ENCODE measurements at regions of chr1 and their contacts with region 1.

Region 1: DNA sequence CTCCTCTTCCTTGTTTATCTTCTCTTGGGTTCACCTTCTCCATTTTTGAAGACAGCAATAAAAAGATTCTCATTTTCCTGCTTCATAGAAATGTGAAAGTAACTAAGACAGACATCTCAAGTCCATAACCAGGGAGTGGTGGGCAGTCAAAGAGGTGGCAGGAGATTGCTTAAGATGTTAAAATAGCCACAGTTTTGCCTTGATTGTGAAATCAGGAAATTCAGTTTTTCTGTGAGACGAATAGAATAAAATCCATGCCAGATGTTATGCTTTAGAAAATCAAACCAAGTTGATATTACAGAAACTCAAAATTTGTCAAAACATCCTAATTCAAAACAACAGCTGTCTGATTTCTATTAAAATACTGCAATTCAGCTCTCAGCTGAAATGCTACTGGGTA is 57.2 kb downstream of the TNN start:
- DNase-seq: no peak
- H3K4me3 ChIP-seq: no peak overlapping the region
- H3K4me3 Mint-ChIP-seq: no peak overlapping the region
- H3K27ac Mint-ChIP-seq: no peak overlapping the region
- H3K4me1 ChIP-seq: peaks cover 9% of the 10 kb centered on the region
- H3K4me1 Mint-ChIP-seq: no peaks in the 10 kb centered on the region
- H3K27me3 ChIP-seq: no peaks in the 10 kb centered on the region
- H3K27me3 Mint-ChIP-seq: peaks cover 2% of the 10 kb centered on the region
- CTCF ChIP-seq: no peak

Region 2: GRCh38 chr1:174769961-174770549 is 354.8 kb before region 1 on chr1:
- CTCF ChIA-PET with region 1: no interaction called
- POLR2A ChIA-PET with region 1: no interaction called
- intact Hi-C with region 1: loop called (anchors 1 kb)
- DNase-seq: peak in 1 of 2 experiments; percentile 19
- H3K4me3 ChIP-seq: no peak overlapping the region
- H3K4me3 Mint-ChIP-seq: no peak overlapping the region
- H3K27ac Mint-ChIP-seq: no peak overlapping the region
- H3K4me1 ChIP-seq: peaks cover 23% of the 10 kb centered on the region
- H3K4me1 Mint-ChIP-seq: peaks cover 34% of the 10 kb centered on the region
- H3K27me3 ChIP-seq: no peaks in the 10 kb centered on the region
- H3K27me3 Mint-ChIP-seq: no peaks in the 10 kb centered on the region
- CTCF ChIP-seq: peak; percentile 49 to 67

Region 3: GRCh38 chr1:174953285-174954072 is 171.4 kb before region 1 on chr1:
- CTCF ChIA-PET with region 1: no interaction called
- POLR2A ChIA-PET with region 1: no interaction called
- intact Hi-C with region 1: no loop called
- DNase-seq: peak; percentile 69 to 76
- H3K4me3 ChIP-seq: peak overlapping the region; percentile 13; the same call in 1 of the 2 replicates
- H3K4me3 Mint-ChIP-seq: peak overlapping the region; percentile 41
- H3K27ac Mint-ChIP-seq: peak overlapping the region; percentile 0
- H3K4me1 ChIP-seq: peaks cover 26% of the 10 kb centered on the region
- H3K4me1 Mint-ChIP-seq: peaks cover 15% of the 10 kb centered on the region
- H3K27me3 ChIP-seq: no peaks in the 10 kb centered on the region
- H3K27me3 Mint-ChIP-seq: no peaks in the 10 kb centered on the region
- CTCF ChIP-seq: no peak

Region 4: GRCh38 chr1:175009532-175009931 is 115.3 kb before region 1 on chr1:
- CTCF ChIA-PET with region 1: no interaction called
- POLR2A ChIA-PET with region 1: no interaction called
- intact Hi-C with region 1: no loop called
- DNase-seq: no peak
- H3K4me3 ChIP-seq: no peak overlapping the region
- H3K4me3 Mint-ChIP-seq: no peak overlapping the region
- H3K27ac Mint-ChIP-seq: no peak overlapping the region
- H3K4me1 ChIP-seq: no peaks in the 10 kb centered on the region
- H3K4me1 Mint-ChIP-seq: no peaks in the 10 kb centered on the region
- H3K27me3 ChIP-seq: no peaks in the 10 kb centered on the region
- H3K27me3 Mint-ChIP-seq: no peaks in the 10 kb centered on the region
- CTCF ChIP-seq: no peak

Region 5: DNA sequence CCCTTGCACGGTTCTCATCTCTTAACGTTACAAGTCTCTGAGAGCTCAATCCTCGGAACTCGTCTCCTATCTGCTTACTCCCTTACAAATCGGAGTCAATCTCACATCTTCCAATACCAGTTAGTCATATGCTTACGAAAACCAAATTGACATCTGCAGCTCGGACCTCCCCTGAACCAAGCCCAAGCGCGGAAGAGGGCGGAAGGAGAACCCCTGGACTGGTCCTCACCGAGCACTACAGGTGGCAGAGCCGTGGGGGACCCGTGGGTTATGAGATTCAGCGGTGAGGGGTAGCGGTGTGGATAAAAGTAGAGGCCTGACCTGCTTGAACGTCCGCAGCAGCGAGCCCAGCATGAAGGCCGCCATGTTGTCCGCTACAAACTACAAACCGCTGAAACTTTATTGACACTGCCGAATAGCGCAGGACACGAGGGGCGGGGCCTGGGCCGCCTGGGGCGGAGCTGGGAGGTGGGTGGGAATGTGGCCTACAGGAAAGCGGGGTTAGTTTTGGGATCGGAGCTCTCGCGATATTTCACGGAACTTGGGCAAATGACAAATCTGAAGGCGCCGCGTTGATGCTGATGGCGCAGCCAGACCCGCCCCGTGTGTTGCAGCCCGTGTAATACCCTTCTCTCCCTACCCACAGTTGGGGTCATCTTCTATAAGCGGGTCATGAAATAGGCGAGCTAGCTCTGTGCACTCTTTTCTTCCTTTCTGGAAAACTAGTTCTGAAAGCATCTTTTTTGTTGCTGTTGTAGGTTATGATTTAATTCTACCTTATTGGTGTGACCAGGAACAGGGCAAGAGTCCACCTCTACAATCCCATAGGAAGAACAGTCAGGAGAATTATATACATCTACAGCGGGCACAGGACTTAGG is 101.6 kb before region 1 on chr1 and contains the start of gene MRPS14:
- CTCF ChIA-PET with region 1: interaction called, 15 read pairs
- POLR2A ChIA-PET with region 1: interaction called, 6 read pairs
- intact Hi-C with region 1: no loop called
- DNase-seq: peak; percentile 98 to 99
- H3K4me3 ChIP-seq: peak within 1 kb of the TSS; percentile 66
- H3K4me3 Mint-ChIP-seq: peak within 1 kb of the TSS; percentile 88
- H3K27ac Mint-ChIP-seq: peak within 1 kb of the TSS; percentile 75
- H3K4me1 ChIP-seq: no peaks in the 10 kb centered on the region
- H3K4me1 Mint-ChIP-seq: peaks cover 18% of the 10 kb centered on the region
- H3K27me3 ChIP-seq: no peaks in the 10 kb centered on the region
- H3K27me3 Mint-ChIP-seq: no peaks in the 10 kb centered on the region
- CTCF ChIP-seq: no peak
- total RNA-seq, gene MRPS14: 35.3 and 38.1 TPM in 2 replicates

Region 6: DNA sequence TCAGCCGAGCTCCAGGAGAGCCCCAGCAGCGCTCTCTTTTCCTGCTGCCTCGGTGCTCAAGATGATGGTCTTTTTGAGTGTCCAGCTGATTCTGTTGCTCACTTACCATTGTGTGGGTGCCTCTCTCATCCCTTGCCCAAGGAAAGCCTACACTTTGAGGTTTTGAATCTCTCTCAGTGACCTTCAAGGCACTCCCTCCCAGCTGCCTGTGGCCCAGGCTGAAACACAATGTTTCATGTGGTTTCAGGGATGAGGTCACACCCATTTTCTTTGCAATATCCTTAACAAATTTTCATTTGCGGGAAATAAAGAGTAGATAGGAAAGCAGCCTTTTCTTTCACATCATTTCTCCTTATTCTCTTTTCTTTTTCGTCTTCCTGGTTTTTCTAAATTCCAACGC is 89.0 kb before region 1 on chr1:
- CTCF ChIA-PET with region 1: interaction called, 18 read pairs
- POLR2A ChIA-PET with region 1: no interaction called
- intact Hi-C with region 1: no loop called
- DNase-seq: no peak
- H3K4me3 ChIP-seq: no peak overlapping the region
- H3K4me3 Mint-ChIP-seq: no peak overlapping the region
- H3K27ac Mint-ChIP-seq: no peak overlapping the region
- H3K4me1 ChIP-seq: no peaks in the 10 kb centered on the region
- H3K4me1 Mint-ChIP-seq: peaks cover 13% of the 10 kb centered on the region
- H3K27me3 ChIP-seq: no peaks in the 10 kb centered on the region
- H3K27me3 Mint-ChIP-seq: no peaks in the 10 kb centered on the region
- CTCF ChIP-seq: no peak

Region 7: GRCh38 chr1:175072099-175072951 is 52.5 kb before region 1 on chr1:
- CTCF ChIA-PET with region 1: interaction called, 13 read pairs
- POLR2A ChIA-PET with region 1: interaction called, 4 read pairs
- intact Hi-C with region 1: loop called (anchors 1 kb)
- DNase-seq: no peak
- H3K4me3 ChIP-seq: no peak overlapping the region
- H3K4me3 Mint-ChIP-seq: no peak overlapping the region
- H3K27ac Mint-ChIP-seq: no peak overlapping the region
- H3K4me1 ChIP-seq: no peaks in the 10 kb centered on the region
- H3K4me1 Mint-ChIP-seq: no peaks in the 10 kb centered on the region
- H3K27me3 ChIP-seq: no peaks in the 10 kb centered on the region; the same call in none of the 2 replicates
- H3K27me3 Mint-ChIP-seq: peaks cover 5% of the 10 kb centered on the region
- CTCF ChIP-seq: no peak

Region 8: DNA sequence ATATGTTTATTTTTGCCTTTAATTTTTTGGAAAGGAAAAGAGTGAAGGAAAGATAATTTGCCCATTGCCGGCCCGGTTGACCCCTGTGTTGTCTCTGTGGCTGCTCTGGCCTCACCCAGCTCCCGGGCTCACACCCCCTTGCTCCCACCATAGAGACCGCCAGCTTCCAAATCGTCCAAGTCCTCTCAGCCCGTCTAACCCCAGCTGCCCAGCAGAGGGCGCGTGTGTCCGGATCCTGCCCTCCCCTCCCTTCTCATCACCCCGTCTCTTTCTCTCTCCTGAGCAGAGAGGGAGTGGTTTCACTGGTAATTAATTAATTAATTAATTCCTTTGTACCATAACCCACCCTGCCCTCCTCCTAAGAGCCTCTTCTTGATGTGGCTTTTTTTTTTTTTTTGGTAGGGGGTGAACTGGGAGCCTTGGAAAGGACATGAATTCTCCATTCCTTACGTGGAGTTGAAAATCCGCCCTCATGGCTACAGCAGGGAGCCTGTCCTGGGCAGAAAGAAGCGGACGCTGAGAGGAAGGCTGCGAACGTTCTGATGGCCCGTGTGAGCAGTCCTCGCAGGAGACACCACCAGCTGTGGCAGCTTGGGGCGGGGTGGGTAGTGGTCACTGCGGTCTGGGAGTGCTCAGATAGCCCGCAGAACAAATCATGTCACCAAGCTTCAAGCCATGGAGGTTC is 21.8 kb after region 1 on chr1:
- CTCF ChIA-PET with region 1: interaction called, 18 read pairs
- POLR2A ChIA-PET with region 1: no interaction called
- intact Hi-C with region 1: no loop called
- DNase-seq: peak; percentile 68 to 70
- H3K4me3 ChIP-seq: no peak overlapping the region
- H3K4me3 Mint-ChIP-seq: no peak overlapping the region
- H3K27ac Mint-ChIP-seq: no peak overlapping the region
- H3K4me1 ChIP-seq: peaks cover 8% of the 10 kb centered on the region; the same call in 1 of the 2 replicates
- H3K4me1 Mint-ChIP-seq: no peaks in the 10 kb centered on the region
- H3K27me3 ChIP-seq: no peaks in the 10 kb centered on the region
- H3K27me3 Mint-ChIP-seq: no peaks in the 10 kb centered on the region
- CTCF ChIP-seq: peak; percentile 75 to 79